Right ventricle myocardium inferior (tissue), 1 donor: ENCODE measurements at regions of chr10 and their contacts with region 1.

Region 1: DNA sequence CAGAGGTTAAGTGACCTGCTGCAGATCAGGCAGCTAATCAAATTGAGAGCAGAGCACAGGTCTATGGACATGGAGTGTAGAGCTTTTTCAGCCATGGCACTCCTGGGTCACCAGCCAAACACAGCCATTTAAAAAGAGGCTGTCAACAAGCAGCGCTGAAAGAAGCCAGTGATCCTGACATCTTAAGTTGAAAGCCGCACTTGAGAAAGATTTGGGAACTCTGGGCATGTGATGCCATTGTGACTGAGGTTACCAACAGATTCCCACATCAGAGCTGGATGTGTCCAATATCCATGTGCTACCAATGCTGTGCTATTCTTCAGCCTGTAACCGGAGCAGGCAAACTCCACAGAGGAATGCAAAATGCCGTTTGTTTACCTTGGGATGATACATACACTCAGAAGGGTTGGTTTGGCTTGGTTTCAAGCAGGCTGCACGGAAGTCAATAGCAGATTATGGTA is 56.2 kb upstream of the ABLIM1 start:
- DNase-seq: no peak
- ATAC-seq: peak; percentile 83

Region 2: DNA sequence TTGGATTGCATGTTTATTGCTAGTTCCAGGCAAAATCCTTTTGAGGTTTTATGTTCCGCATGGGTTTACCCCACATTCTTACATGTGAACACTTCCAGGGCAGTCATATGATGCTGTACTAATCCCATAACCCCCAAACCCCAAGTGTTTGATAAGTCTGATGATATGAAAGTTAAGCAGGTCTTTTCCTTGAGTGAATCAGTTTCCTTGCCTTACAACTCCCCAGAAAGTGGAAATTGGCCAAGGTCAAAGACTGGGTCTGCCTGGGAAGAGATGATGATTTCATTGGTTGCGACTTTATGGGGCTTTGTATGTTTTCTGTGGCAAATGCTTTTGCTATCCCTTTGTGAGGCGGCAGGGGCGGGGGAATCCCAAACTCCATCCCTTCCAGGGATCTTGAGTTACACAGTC is 334.7 kb before region 1 on chr10:
- intact Hi-C with region 1: no loop called
- DNase-seq: no peak
- ATAC-seq: no peak

Region 3: GRCh38 chr10:114427124-114427852 is 287.0 kb before region 1 on chr10:
- intact Hi-C with region 1: no loop called
- DNase-seq: no peak
- ATAC-seq: peak; percentile 36

Region 4: GRCh38 chr10:114470956-114471905 is 243.1 kb before region 1 on chr10:
- intact Hi-C with region 1: loop called (anchors 5 kb)
- DNase-seq: peak; percentile 82
- ATAC-seq: peak; percentile 67

Region 5: GRCh38 chr10:114684085-114684821 is 30.1 kb before region 1 on chr10:
- intact Hi-C with region 1: loop called (anchors 1 kb)
- DNase-seq: peak; percentile 74
- ATAC-seq: peak; percentile 43

Region 6: DNA sequence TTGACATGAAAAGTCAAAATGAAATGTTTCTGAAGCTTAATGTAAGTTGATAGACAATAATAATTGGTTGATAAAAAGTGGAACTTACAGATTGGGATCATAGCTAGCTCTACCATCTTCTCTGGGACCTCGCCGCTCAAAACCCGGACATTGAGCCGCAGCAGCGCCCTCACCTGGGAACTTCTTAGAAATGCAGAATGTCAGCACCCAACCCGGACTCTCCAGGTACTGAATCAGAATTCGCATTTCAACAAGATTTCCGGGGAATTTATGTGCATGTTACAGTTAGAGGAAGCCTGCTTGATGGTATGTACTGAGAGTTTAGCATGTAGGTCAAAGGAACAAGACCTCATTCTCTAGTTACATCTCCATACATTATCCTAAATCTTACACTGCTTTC is 19.6 kb before region 1 on chr10:
- intact Hi-C with region 1: loop called (anchors 2 kb)
- DNase-seq: no peak
- ATAC-seq: no peak

Region 7: DNA sequence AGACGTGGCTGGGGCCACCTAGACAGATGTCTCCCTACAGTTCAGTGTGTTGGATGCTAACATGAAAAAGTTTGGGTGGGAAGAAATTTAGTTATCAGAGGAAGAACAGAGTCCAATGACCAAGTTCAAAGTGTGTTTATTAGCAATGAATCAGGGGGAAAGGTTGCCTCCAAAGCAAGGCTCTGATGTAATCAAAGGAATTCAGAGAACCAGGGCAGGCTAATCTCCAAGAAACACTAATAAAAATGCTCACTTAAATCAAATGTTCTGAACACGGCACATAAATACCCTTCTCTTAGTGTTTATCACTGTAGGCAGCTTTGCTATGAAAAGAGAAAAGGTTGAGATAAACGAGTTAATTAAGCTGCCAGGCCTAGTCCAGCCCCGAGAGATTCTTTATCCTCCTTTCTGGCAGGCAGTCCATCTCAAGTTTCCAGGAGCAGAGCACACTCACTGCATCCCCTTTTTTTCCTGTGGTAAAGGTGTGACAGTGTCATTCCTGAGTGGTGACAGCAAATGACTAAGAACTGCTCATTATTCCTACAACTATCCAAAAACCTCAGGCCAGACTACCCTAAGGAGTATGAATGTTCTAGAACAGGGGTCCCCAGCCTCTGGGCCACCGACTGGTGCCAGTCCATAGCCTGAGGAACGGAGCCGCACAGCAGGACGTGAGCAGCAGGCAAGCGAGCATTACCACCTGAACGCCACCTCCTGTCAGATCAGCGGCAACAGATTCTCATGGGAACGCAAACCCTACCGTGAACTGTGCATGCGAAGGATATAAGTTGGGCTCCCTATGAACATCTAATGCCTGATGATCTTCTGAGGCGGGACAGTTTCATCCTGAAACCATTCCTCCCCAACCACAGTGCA is 40.4 kb after region 1 on chr10:
- intact Hi-C with region 1: loop called (anchors 5 kb)
- DNase-seq: no peak
- ATAC-seq: peak; percentile 21

Region 8: DNA sequence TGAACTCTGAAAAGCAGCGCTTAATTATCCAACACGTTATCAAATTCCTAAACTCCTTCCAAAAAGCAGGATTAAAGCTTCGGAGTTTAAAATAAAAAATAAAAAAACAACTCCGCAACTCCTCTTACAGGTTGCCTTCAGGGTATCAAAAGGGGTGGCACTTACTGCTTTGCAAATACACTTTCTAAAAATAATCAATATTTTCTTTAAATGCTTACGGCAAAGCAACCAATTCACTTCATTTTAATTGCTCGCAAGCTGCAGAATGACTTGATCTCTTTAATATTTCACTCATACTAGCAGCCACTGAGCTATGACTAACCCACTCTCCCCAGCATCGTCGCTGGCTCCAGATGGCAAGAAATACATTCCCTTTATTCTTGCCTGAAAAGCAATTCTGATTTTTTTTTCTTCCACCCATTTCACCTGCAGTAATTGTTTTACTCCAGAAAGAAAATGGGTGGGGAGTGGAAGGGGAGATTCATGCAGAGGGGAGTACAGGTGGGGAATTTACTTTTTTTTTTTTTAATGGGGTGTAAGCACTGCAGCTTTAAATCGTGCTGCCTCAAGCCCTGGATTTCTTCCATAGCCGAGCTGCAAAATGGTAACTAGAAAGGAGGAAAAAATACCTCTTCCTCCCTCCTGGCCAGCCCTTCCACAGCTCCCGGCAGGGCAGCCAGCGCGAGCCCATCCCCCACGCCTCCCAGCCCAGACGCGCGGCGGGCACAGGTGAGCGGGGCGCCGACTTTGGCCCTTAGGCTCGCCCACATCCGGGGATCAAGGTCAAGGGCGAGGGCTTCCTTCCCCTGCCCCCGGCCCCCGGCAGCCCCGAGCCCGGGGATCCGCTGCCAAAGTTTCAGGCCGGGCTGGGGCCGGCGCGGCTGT is 53.0 kb after region 1 on chr10:
- intact Hi-C with region 1: loop called (anchors 2 kb)
- DNase-seq: peak; percentile 74
- ATAC-seq: peak; percentile 77